ENCODE measurements at regions of chr2 and their contacts with region 1.

Region 1: GRCh38 chr2:230974096-230974913 is 21.6 kb upstream of the SPATA3 start:
- DNase-seq: peak; percentile 87
- H3K4me3 Mint-ChIP-seq: no peak overlapping the region
- H3K27ac Mint-ChIP-seq: peak overlapping the region; percentile 73
- H3K4me1 Mint-ChIP-seq: peaks cover 21% of the 10 kb centered on the region
- H3K27me3 Mint-ChIP-seq: peaks cover 5% of the 10 kb centered on the region

Region 2: GRCh38 chr2:230798769-230799399 is 175.4 kb before region 1 on chr2:
- CTCF ChIA-PET with region 1: no interaction called
- intact Hi-C with region 1: no loop called
- DNase-seq: peak; percentile 72
- H3K4me3 Mint-ChIP-seq: no peak overlapping the region
- H3K27ac Mint-ChIP-seq: no peak overlapping the region
- H3K4me1 Mint-ChIP-seq: peaks cover 14% of the 10 kb centered on the region
- H3K27me3 Mint-ChIP-seq: no peaks in the 10 kb centered on the region

Region 3: DNA sequence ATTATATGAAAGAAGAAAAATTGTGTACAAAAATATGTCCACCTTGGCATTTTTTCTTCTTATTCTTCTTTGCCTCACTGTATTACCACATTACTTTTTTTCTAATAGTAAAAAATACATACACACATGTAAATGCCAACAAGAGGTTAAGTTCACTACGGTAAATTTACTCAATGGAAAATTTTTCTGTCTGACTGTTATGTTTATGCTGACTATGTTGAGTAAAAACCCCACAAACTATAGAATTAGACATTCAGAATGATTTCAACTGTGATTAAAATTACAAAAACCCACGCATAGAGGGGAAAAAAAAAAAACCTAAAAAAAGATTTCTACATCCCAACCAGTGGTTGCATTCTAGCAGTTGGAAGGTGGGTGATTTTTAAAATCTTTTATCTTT is 54.6 kb before region 1 on chr2:
- CTCF ChIA-PET with region 1: no interaction called
- intact Hi-C with region 1: loop called (anchors 1 kb)
- DNase-seq: no peak
- H3K4me3 Mint-ChIP-seq: peak overlapping the region; percentile 47
- H3K27ac Mint-ChIP-seq: no peak overlapping the region
- H3K4me1 Mint-ChIP-seq: peaks cover 67% of the 10 kb centered on the region
- H3K27me3 Mint-ChIP-seq: peaks cover 2% of the 10 kb centered on the region

Region 4: GRCh38 chr2:230956827-230957755 is 17.2 kb before region 1 on chr2:
- CTCF ChIA-PET with region 1: interaction called, 3 read pairs
- intact Hi-C with region 1: loop called (anchors 1 kb)
- DNase-seq: peak; percentile 48
- H3K4me3 Mint-ChIP-seq: peak overlapping the region; percentile 67
- H3K27ac Mint-ChIP-seq: peak overlapping the region; percentile 48
- H3K4me1 Mint-ChIP-seq: peaks cover 22% of the 10 kb centered on the region
- H3K27me3 Mint-ChIP-seq: peaks cover 50% of the 10 kb centered on the region